ENCODE measurements at regions of chr10 and their contacts with region 1.

Region 1: DNA sequence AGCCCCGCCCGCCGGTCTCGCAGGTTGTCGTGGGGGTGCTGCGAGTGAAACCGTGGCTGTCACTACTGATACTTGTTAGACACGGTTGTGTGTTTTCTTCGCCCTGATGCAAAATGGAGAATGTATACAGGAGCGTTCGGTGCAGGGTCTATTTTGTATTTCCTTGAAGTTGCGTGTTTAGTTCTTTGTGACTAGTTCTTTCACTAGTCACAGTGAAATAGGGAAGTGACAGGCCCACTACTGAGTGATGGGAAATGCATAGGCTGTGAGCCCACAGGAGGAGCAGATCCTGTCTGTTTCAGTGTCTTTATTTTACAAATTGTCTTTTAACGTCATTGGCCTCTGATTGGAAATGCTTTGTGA is 675 bp downstream of the ABRAXAS2 start:
- DNase-seq: no peak

Region 2: DNA sequence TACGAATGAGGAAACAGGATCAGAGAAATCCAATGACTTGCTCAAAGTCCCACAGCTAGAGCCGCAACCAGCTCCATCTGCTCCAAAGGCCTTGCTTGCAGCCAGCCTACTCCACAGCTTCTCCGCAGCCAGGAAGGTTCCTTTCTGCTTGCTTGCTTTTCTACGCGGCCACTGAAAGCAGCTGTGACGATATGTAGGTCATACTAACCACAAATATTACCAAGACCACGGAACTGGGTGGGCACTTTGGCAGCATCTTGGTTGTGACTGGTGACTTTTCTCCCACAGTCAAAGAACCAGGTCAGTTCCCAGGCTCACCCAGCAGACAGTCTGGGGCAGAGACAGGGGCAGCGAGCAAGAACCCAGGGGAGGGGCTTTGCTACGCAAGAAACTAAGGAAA is 144.5 kb before region 1 on chr10:
- intact Hi-C with region 1: no loop called
- DNase-seq: no peak

Region 3: GRCh38 chr10:124748166-124748565 is 54.1 kb before region 1 on chr10:
- intact Hi-C with region 1: loop called in 1 of 2 experiments (anchors 2 kb)
- DNase-seq: no peak

Measured in posterior vena cava (tissue), 2 donors.